PC-9 (cell line): ENCODE measurements at regions of chr2 and their contacts with region 1.

Region 1: DNA sequence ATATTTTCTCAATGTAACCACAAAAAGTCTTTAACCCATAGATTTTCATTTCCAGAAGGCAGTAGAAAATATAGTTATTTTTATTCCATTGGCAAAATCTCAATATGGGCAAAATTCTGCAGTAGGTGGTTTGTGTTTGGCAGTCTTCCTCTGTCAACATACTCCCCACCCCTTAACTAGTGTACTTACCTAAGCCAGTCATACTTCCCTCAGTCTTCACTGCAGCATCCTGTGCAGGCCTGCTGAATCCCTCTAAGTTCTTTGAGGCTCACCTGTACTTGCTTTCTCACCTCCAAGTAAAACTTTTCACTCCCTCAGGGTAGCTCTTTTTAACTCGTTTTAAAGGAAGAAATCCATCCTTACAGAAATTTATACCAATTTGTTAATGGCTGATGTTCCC is 6.8 kb downstream of the CARF start:
- DNase-seq: no peak
- H3K4me3 ChIP-seq: no peak overlapping the region
- H3K27ac ChIP-seq: no peak overlapping the region
- H3K4me1 ChIP-seq: no peaks in the 10 kb centered on the region
- H3K27me3 ChIP-seq: no peaks in the 10 kb centered on the region
- CTCF ChIP-seq: no peak

Region 2: GRCh38 chr2:202423139-202423538 is 495.7 kb before region 1 on chr2:
- CTCF ChIA-PET with region 1: no interaction called
- POLR2A ChIA-PET with region 1: no interaction called
- intact Hi-C with region 1: no loop called
- DNase-seq: no peak
- H3K4me3 ChIP-seq: no peak overlapping the region
- H3K27ac ChIP-seq: no peak overlapping the region
- H3K4me1 ChIP-seq: no peaks in the 10 kb centered on the region
- H3K27me3 ChIP-seq: no peaks in the 10 kb centered on the region
- CTCF ChIP-seq: no peak

Region 3: DNA sequence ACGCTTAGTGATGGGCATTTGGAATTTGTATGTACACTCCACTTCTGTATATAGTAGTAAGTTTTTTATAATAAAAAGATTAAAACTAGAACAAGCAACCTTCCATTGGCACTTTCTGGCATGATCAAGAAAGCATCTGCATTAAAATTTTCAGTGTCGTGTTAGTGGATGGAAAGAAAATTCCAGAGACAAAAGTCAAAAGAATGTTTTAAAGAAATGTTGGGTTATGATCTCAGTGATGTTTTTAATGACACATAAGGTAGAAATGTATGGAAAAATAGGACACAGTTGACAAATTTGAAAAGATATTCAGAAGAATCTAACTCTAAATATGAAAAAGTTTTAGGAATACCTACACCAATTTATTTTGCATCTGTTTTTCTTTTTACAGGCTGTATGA is 410.2 kb before region 1 on chr2:
- CTCF ChIA-PET with region 1: no interaction called
- POLR2A ChIA-PET with region 1: no interaction called
- intact Hi-C with region 1: no loop called
- DNase-seq: no peak
- H3K4me3 ChIP-seq: no peak overlapping the region
- H3K27ac ChIP-seq: no peak overlapping the region
- H3K4me1 ChIP-seq: no peaks in the 10 kb centered on the region
- H3K27me3 ChIP-seq: no peaks in the 10 kb centered on the region
- CTCF ChIP-seq: no peak

Region 4: GRCh38 chr2:202609381-202610145 is 309.3 kb before region 1 on chr2:
- CTCF ChIA-PET with region 1: no interaction called
- POLR2A ChIA-PET with region 1: no interaction called
- intact Hi-C with region 1: no loop called
- DNase-seq: no peak
- H3K4me3 ChIP-seq: no peak overlapping the region
- H3K27ac ChIP-seq: no peak overlapping the region
- H3K4me1 ChIP-seq: no peaks in the 10 kb centered on the region
- H3K27me3 ChIP-seq: no peaks in the 10 kb centered on the region
- CTCF ChIP-seq: no peak

Region 5: GRCh38 chr2:202963712-202964111 is 44.9 kb after region 1 on chr2:
- CTCF ChIA-PET with region 1: no interaction called
- POLR2A ChIA-PET with region 1: interaction called, 11 read pairs
- intact Hi-C with region 1: no loop called
- DNase-seq: no peak
- H3K4me3 ChIP-seq: no peak overlapping the region
- H3K27ac ChIP-seq: no peak overlapping the region
- H3K4me1 ChIP-seq: no peaks in the 10 kb centered on the region
- H3K27me3 ChIP-seq: no peaks in the 10 kb centered on the region
- CTCF ChIP-seq: no peak